ENCODE measurements at regions of chr1 and their contacts with region 1.

Region 1: GRCh38 chr1:172870901-172871606 is 179.7 kb downstream of the TNFSF18 start:
- DNase-seq: no peak
- H3K4me3 Mint-ChIP-seq: no peak overlapping the region
- H3K27ac Mint-ChIP-seq: no peak overlapping the region
- H3K4me1 Mint-ChIP-seq: peaks cover 32% of the 10 kb centered on the region
- H3K27me3 Mint-ChIP-seq: peaks cover 24% of the 10 kb centered on the region

Region 2: GRCh38 chr1:172761581-172762025 is 109.5 kb before region 1 on chr1:
- CTCF ChIA-PET with region 1: no interaction called
- intact Hi-C with region 1: loop called (anchors 5 kb)
- DNase-seq: no peak
- H3K4me3 Mint-ChIP-seq: no peak overlapping the region
- H3K27ac Mint-ChIP-seq: no peak overlapping the region
- H3K4me1 Mint-ChIP-seq: peaks cover 57% of the 10 kb centered on the region
- H3K27me3 Mint-ChIP-seq: no peaks in the 10 kb centered on the region

Region 3: DNA sequence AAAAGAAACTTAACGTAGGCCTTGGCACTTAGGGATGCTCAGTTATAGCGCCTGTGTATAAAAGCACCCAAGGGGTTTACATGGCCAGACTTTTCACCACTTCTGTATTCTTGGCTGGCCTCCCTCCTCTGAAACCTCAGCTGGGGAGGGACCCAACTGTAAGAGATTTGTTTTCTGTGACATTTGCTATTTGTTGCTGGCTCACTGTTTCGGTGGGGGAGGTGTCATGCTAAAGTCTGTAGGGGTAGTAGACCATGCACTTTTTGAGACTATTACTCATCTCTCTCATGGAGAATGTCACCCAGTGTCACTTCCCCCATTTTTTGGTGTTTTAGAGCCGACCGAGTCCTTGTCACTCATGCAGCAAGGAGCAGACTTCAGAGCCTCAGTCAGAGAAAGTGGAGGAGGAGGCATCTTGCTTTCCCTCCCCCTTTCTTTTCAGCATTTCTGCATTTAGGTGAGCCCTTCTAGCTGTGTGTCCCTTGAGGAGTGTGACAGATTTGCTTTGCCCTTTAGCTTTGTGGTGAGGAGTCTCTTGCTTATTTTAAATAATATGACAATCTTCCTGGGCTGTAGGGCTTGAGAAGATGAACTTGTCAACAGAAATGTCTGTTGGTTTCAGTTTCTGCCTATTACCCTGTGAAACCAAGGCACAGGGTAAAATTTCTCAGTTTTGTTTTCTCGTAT is 52.1 kb before region 1 on chr1:
- CTCF ChIA-PET with region 1: no interaction called
- intact Hi-C with region 1: loop called (anchors 1 kb)
- DNase-seq: peak; percentile 68
- H3K4me3 Mint-ChIP-seq: no peak overlapping the region
- H3K27ac Mint-ChIP-seq: no peak overlapping the region
- H3K4me1 Mint-ChIP-seq: peaks cover 25% of the 10 kb centered on the region
- H3K27me3 Mint-ChIP-seq: no peaks in the 10 kb centered on the region

Region 4: GRCh38 chr1:172895050-172895460 is 24.0 kb after region 1 on chr1:
- CTCF ChIA-PET with region 1: interaction called, 6 read pairs
- intact Hi-C with region 1: loop called (anchors 1 kb)
- DNase-seq: peak; percentile 40
- H3K4me3 Mint-ChIP-seq: no peak overlapping the region
- H3K27ac Mint-ChIP-seq: peak overlapping the region; percentile 9
- H3K4me1 Mint-ChIP-seq: peaks cover 42% of the 10 kb centered on the region
- H3K27me3 Mint-ChIP-seq: peaks cover 4% of the 10 kb centered on the region

Region 5: DNA sequence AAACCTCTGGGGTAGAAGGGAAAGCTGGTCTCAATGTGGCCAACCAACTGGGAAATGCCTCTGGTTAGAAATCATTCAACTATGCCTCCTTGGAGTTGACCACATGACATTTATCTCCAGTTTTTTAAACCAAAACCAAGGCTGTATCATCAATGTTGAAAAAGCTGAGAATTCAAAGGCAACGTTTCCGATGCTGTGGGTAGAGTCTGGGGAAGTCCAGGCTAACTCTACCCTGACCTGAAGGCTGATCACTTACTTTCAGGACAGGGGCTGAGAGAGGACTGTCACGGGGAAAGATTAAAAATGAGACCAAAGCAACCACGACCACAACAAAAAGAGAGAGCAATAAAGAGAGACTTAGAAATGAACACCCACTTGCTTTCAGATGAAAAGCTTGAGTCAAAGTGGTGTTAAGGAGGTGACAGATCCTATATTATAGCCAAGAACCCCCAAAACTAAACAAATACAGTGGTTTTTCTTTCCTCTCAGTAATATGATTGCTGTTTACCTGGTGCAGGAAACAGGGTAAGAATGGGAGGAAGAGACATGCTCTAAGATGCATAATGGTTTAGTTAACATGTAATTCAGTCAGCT is 426.8 kb after region 1 on chr1:
- CTCF ChIA-PET with region 1: no interaction called
- intact Hi-C with region 1: loop called (anchors 2 kb)
- DNase-seq: peak; percentile 76
- H3K4me3 Mint-ChIP-seq: no peak overlapping the region
- H3K27ac Mint-ChIP-seq: peak overlapping the region; percentile 2
- H3K4me1 Mint-ChIP-seq: peaks cover 41% of the 10 kb centered on the region
- H3K27me3 Mint-ChIP-seq: no peaks in the 10 kb centered on the region